ENCODE measurements at regions of chr1 and their contacts with region 1.

Region 1: DNA sequence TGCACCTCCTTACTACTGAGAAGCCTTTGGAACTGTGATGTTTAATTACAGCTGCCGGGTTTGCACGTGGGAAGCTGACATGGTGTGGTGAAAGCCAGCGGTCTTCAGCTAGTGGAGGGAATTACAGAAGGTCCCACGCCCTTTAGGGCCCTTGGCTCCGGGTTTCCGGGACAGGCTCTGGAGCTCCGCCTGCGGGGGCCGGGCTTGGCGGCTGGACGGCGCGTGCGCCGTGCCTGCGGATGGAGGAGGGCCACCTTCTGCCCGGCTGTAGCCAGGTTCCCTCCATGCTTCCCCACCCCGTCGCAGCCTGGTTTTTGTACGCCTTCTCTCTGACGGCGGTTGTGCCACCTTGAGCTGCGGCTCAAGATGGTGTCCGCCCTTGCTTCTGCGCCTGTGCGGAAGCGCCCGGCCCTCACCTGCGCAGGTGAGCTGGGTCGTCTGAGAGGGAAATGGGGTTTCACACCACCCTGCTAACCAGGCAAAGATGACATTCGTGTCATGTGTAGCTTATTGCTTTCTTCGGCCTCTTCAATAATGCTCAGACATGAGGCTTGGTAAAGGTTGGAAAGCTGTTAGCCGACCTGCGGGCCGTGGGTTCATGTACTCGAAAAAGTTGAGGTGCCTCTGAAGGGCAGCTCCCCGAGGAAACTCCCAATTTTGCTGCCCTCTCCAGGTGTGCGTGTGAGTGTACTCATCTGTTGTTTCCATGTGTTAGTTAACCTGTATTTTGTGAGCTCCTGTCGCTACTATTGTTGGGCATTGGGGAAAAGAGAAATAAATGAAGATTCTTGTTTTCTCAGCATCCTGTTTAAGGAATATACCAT is 36.6 kb upstream of the OPRD1 start:
- DNase-seq: peak; percentile 86
- H3K4me3 ChIP-seq: peak overlapping the region; percentile 7 to 50 (median 39)
- H3K27ac ChIP-seq: peak overlapping the region; percentile 74 to 84 (median 78)
- H3K4me1 ChIP-seq: peaks cover 0 to 12% (median 12%) of the 10 kb centered on the region in 4 donors
- H3K27me3 ChIP-seq: no peaks in the 10 kb centered on the region
- CTCF ChIP-seq: peak in 1 of 5 experiments; percentile 13
- EP300 ChIP-seq: no peak
- POLR2A ChIP-seq: peak; percentile 69

Region 2: DNA sequence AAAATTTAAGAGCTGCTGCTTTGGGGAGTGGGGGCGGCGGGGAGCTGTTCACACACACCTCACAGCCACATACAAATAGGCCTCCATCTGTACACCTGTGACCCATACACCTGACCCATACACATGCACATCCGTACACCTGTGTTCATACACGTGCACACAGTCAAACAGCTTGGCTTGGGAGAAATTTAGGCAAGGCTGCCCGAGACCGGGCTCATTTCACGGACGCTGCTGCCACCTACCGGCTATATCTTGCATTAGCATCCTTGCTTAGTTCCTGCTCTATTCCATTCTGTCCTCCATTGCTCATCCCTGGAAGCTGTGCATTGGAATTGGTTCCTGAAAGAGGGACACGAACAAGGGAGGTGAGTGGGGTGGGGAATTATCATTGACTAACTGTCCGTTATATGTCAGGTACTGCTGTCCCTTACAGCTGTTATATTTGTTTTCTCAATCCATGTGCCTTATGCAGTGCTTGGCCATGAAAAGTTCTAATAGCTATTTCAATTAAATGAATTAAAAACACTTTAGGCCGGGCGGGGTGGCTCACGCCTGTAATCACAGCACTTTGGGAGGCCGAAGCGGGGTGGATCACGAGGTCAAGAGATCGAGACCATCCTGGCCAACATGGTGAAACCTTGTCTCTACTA is 101.9 kb after region 1 on chr1:
- in situ Hi-C with region 1: loop called in 1 of 4 experiments (anchors 5 kb)
- intact Hi-C with region 1: no loop called
- DNase-seq: peak; percentile 84
- H3K4me3 ChIP-seq: no peak overlapping the region
- H3K27ac ChIP-seq: no peak overlapping the region
- H3K4me1 ChIP-seq: peaks cover 0 to 6% (median 1%) of the 10 kb centered on the region in 4 donors
- H3K27me3 ChIP-seq: no peaks in the 10 kb centered on the region
- CTCF ChIP-seq: peak; percentile 84 to 94 (median 94)
- EP300 ChIP-seq: no peak
- POLR2A ChIP-seq: no peak

Region 3: DNA sequence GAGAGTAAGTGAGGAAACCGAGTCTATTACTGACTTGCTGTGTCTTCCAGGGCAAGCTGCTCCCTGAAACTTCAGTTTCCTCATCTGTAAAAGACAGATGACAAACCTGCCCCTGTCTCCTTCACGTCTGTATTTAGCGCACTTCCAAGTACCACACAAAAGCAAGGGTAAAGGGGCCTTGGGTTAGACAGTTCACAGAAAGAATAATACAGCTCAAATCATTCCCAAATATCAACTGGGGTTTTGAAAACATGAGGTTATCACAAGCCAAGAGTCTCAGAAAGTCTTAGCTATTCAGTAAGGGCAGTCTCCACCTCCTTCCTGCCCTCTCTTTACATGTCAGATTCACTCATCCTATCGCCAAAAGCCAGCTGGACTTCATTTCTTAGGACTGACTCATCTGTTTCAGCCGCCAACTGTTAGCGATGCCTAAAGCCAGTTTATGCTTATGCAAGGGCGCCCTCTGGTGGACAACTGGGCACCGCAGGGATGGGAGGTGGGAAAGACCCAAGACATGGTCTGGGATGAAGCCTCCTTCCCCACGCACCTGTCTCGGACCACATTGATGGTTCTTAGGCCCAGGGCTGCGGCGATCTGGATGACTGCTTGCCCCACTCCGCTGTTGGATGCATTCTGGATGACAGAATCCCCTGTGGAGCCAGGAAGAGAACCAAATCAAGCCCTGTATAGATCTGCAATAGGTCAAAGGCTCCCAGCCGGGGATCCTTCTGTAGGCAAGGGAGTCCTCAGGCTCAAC is 427.4 kb after region 1 on chr1:
- in situ Hi-C with region 1: loop called in 2 of 4 experiments (anchors 10 to 25 kb)
- intact Hi-C with region 1: no loop called
- DNase-seq: peak; percentile 96
- H3K4me3 ChIP-seq: no peak overlapping the region
- H3K27ac ChIP-seq: peak overlapping the region; percentile 69 to 81 (median 76)
- H3K4me1 ChIP-seq: peaks cover 5 to 14% (median 8%) of the 10 kb centered on the region in 4 donors
- H3K27me3 ChIP-seq: no peaks in the 10 kb centered on the region
- CTCF ChIP-seq: peak; percentile 92 to 97 (median 96)
- EP300 ChIP-seq: no peak
- POLR2A ChIP-seq: no peak